ENCODE measurements at regions of chr12 and their contacts with region 1.

Region 1: DNA sequence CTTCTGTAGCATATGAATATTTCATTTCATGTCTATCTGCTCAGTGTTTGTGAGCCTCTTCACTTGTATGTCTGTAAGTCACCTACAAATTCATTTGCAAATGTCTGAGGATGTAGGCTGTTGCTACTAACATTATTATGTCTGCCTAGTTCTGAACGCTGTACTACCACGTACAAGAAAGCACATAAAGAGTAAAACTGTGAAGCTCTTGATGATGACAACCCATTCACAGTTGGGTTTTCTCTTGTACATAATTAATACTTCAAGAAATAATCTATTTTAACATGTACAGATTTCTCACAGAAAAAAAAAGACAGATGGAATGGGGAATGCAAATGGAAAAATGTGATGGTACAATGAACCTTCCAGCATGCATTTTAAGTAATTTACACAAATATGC is 64.3 kb upstream of the CPNE8 start:
- DNase-seq: no peak
- ATAC-seq: no peak
- H3K4me3 ChIP-seq: no peak overlapping the region
- H3K27ac ChIP-seq: no peak overlapping the region
- H3K4me1 ChIP-seq: no peaks in the 10 kb centered on the region
- H3K27me3 ChIP-seq: no peaks in the 10 kb centered on the region
- CTCF ChIP-seq: no peak
- POLR2A ChIP-seq: no peak
- RAD21 ChIP-seq: no peak

Region 2: GRCh38 chr12:39020269-39020668 is 50.6 kb after region 1 on chr12:
- CTCF ChIA-PET with region 1: no interaction called
- POLR2A ChIA-PET with region 1: no interaction called
- RAD21 ChIA-PET with region 1: no interaction called
- intact Hi-C with region 1: loop called (anchors 10 kb)
- DNase-seq: no peak
- ATAC-seq: no peak
- H3K4me3 ChIP-seq: no peak overlapping the region
- H3K27ac ChIP-seq: no peak overlapping the region
- H3K4me1 ChIP-seq: no peaks in the 10 kb centered on the region
- H3K27me3 ChIP-seq: no peaks in the 10 kb centered on the region
- CTCF ChIP-seq: no peak
- POLR2A ChIP-seq: no peak
- RAD21 ChIP-seq: no peak

Region 3: GRCh38 chr12:39043425-39043824 is 73.7 kb after region 1 on chr12:
- CTCF ChIA-PET with region 1: no interaction called
- POLR2A ChIA-PET with region 1: no interaction called
- RAD21 ChIA-PET with region 1: no interaction called
- intact Hi-C with region 1: no loop called
- DNase-seq: no peak
- ATAC-seq: no peak
- H3K4me3 ChIP-seq: no peak overlapping the region
- H3K27ac ChIP-seq: no peak overlapping the region
- H3K4me1 ChIP-seq: no peaks in the 10 kb centered on the region
- H3K27me3 ChIP-seq: no peaks in the 10 kb centered on the region
- CTCF ChIP-seq: no peak
- POLR2A ChIP-seq: no peak
- RAD21 ChIP-seq: no peak